Endothelial cell of umbilical vein (primary cell): ENCODE measurements at regions of chr1 and their contacts with region 1.

Region 1: DNA sequence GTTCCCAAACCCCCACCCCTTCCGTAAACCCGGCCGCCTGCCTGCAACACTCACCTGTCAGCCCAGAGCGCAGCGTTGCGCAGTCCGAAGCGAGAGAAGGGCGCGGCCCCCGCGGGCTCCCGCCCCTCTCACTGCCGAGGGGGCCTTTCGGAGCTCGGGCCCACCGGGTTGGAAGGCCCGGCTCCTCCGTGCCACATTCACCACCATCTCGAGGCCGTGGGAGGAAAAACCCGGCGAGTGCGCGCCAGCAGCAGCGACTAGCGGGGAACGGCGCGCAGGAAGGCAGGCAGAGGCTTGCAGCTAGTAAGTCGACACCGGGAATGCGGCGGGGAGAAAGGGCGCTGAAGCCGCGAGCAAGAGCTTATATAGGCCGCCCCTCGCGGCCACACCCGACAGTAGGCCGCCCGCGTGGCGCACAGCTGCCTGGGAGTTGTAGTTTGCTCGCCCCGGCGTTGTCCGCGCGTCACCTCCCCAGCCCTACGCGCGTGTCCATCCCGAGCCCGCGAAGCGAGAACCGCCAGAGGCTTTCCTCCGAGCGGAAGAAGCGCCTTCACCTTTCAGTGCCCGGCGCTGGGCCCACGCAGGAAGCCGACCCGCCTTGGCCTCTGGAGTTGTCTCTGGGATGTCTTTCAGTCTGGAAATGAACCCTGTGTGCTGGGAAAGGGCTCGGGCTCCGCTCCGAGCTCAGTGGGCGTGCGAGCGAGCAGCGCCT is 10.4 kb upstream of the RAB42 start:
- DNase-seq: peak; percentile 97
- H3K4me3 ChIP-seq: peak overlapping the region; percentile 75 to 98 (median 92)
- H3K27ac ChIP-seq: peak overlapping the region; percentile 65
- H3K4me1 ChIP-seq: peaks cover 31% of the 10 kb centered on the region
- H3K27me3 ChIP-seq: no peaks in the 10 kb centered on the region
- CTCF ChIP-seq: no peak
- POLR2A ChIP-seq: peak; percentile 100

Region 2: GRCh38 chr1:28359592-28360239 is 222.0 kb before region 1 on chr1:
- CTCF ChIA-PET with region 1: interaction called, 14 read pairs
- POLR2A ChIA-PET with region 1: interaction called, 6 read pairs
- dilution Hi-C with region 1: no loop called
- intact Hi-C with region 1: no loop called
- DNase-seq: peak; percentile 73
- H3K4me3 ChIP-seq: no peak overlapping the region
- H3K27ac ChIP-seq: no peak overlapping the region
- H3K4me1 ChIP-seq: no peaks in the 10 kb centered on the region
- H3K27me3 ChIP-seq: no peaks in the 10 kb centered on the region
- CTCF ChIP-seq: peak; percentile 56 to 64
- POLR2A ChIP-seq: no peak

Region 3: GRCh38 chr1:28505406-28506187 is 76.1 kb before region 1 on chr1 and contains the start of gene RCC1:
- CTCF ChIA-PET with region 1: interaction called, 6 read pairs
- POLR2A ChIA-PET with region 1: interaction called, 9 read pairs
- dilution Hi-C with region 1: no loop called
- intact Hi-C with region 1: loop called (anchors 2 kb)
- DNase-seq: peak; percentile 100
- H3K4me3 ChIP-seq: peak within 1 kb of the TSS; percentile 58 to 100 (median 87)
- H3K27ac ChIP-seq: peak within 1 kb of the TSS; percentile 78
- H3K4me1 ChIP-seq: peaks cover 29% of the 10 kb centered on the region
- H3K27me3 ChIP-seq: no peaks in the 10 kb centered on the region
- CTCF ChIP-seq: no peak
- POLR2A ChIP-seq: peak; percentile 100
- total RNA-seq, gene RCC1: 72.7 and 77.7 TPM in 2 replicates

Region 4: GRCh38 chr1:28552758-28553663 is 28.7 kb before region 1 on chr1 and contains the start of gene TRNAU1AP:
- CTCF ChIA-PET with region 1: interaction called, 9 read pairs
- POLR2A ChIA-PET with region 1: interaction called, 59 read pairs
- dilution Hi-C with region 1: no loop called
- intact Hi-C with region 1: loop called (anchors 1 kb)
- DNase-seq: peak; percentile 98
- H3K4me3 ChIP-seq: peak within 1 kb of the TSS; percentile 79 to 86 (median 85)
- H3K27ac ChIP-seq: peak within 1 kb of the TSS; percentile 39
- H3K4me1 ChIP-seq: peaks cover 12% of the 10 kb centered on the region
- H3K27me3 ChIP-seq: no peaks in the 10 kb centered on the region
- CTCF ChIP-seq: no peak
- POLR2A ChIP-seq: peak; percentile 86
- total RNA-seq, gene TRNAU1AP: 46.2 and 49.0 TPM in 2 replicates

Region 5: GRCh38 chr1:28602536-28603439 is 21.1 kb after region 1 on chr1:
- CTCF ChIA-PET with region 1: interaction called, 44 read pairs
- POLR2A ChIA-PET with region 1: interaction called, 20 read pairs
- dilution Hi-C with region 1: no loop called
- intact Hi-C with region 1: no loop called
- DNase-seq: peak; percentile 72
- H3K4me3 ChIP-seq: no peak overlapping the region
- H3K27ac ChIP-seq: no peak overlapping the region
- H3K4me1 ChIP-seq: peaks cover 8% of the 10 kb centered on the region
- H3K27me3 ChIP-seq: no peaks in the 10 kb centered on the region
- CTCF ChIP-seq: peak; percentile 63 to 64
- POLR2A ChIP-seq: no peak